B cell (primary cell): ENCODE measurements at regions of chr3 and their contacts with region 1.

Region 1: GRCh38 chr3:108505811-108506210 is 4.6 kb downstream of the MYH15 start:
- DNase-seq: no peak
- ATAC-seq: no peak
- H3K4me3 ChIP-seq: no peak overlapping the region
- H3K4me3 Mint-ChIP-seq: no peak overlapping the region
- H3K27ac ChIP-seq: no peak overlapping the region
- H3K27ac Mint-ChIP-seq: no peak overlapping the region
- H3K4me1 ChIP-seq: no peaks in the 10 kb centered on the region
- H3K4me1 Mint-ChIP-seq: no peaks in the 10 kb centered on the region
- H3K27me3 ChIP-seq: no peaks in the 10 kb centered on the region
- H3K27me3 Mint-ChIP-seq: no peaks in the 10 kb centered on the region
- CTCF ChIP-seq: no peak

Region 2: DNA sequence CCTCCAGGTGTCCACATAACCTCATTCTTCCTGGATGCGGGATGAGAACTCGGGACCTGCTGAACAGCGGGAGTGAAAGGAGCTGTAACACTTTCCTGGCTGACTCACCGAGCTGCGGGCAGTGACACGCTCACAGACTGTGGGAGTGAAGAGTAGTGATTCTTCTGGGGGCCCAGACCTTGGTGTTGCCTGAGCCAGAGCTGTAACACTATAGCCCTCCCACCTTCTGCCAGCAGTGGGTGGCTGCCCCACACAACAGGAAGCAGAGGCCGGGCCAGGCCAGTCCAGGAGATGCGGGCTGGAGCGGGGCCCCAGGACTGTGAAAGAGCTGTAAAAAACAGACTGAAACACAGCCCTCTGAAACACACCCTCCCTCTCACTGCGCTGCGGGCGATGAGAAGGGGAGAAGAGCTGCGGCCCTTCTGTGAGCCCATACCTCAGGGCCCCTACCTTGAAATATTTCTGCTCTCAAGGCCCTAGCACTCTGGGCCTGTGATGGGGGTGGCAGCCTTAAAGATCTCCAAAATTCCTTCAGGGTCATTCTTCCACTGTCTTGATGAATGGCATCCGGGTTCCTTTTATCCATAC is 1592.6 kb before region 1 on chr3:
- CTCF ChIA-PET with region 1: no interaction called
- POLR2A ChIA-PET with region 1: no interaction called
- intact Hi-C with region 1: no loop called
- DNase-seq: no peak
- ATAC-seq: no peak
- H3K4me3 ChIP-seq: no peak overlapping the region
- H3K4me3 Mint-ChIP-seq: no peak overlapping the region
- H3K27ac ChIP-seq: no peak overlapping the region
- H3K27ac Mint-ChIP-seq: no peak overlapping the region
- H3K4me1 ChIP-seq: no peaks in the 10 kb centered on the region
- H3K4me1 Mint-ChIP-seq: no peaks in the 10 kb centered on the region
- H3K27me3 ChIP-seq: peaks cover 0 to 5% (median 0%) of the 10 kb centered on the region in 4 experiments
- H3K27me3 Mint-ChIP-seq: no peaks in the 10 kb centered on the region
- CTCF ChIP-seq: no peak

Region 3: DNA sequence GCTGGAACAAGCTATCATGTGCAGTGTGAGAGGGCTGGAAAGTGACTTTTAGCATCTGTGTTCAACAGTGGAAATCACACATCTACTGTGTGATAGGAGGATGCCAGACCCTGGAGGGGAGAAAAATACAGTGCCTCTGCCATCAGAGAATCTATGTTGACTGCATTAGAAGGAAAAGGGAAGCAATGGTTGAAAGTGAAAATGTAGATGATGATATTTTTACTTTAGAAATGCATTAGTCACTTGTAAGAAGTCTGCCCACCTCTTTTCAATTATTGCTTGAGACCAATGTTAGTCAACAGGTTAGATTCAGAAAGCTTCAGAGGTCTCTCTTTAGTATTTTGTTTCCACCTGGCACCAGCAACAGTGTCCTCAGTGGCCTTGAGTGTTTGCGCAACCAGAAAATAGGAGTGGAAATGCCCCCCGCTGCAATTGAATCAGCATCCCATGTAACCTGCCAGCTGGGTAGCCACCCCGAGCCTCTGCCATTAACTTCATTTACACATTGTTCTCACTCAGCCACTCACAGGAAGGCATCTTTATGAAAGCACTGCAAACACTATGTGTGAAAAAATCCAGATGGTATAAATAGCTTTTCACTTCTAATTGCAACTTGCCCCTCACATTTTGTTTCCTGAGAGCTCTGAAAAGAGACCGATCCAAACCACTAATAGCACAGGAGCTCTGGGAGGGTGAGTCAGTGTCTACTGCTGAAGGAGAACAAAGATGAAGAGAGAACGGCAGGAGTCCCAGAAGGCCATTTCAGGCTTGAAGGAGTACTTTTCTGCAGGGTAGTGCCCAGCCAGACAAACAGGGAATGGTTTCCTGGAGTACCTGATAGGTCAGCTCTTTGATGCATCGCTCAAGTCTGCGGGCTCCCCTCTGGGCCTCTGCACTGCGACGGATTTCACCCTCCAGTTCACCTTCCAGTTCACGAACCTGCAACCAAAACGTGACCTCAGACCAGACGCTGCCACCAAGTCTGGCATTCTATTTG is 117.4 kb before region 1 on chr3:
- CTCF ChIA-PET with region 1: no interaction called
- POLR2A ChIA-PET with region 1: no interaction called
- intact Hi-C with region 1: no loop called
- DNase-seq: peak; percentile 21
- ATAC-seq: peak; percentile 56
- H3K4me3 ChIP-seq: no peak overlapping the region
- H3K4me3 Mint-ChIP-seq: peak overlapping the region; percentile 59
- H3K27ac ChIP-seq: no peak overlapping the region
- H3K27ac Mint-ChIP-seq: peak overlapping the region; percentile 28
- H3K4me1 ChIP-seq: peaks cover 20 to 24% of the 10 kb centered on the region in 2 donors
- H3K4me1 Mint-ChIP-seq: peaks cover 22% of the 10 kb centered on the region
- H3K27me3 ChIP-seq: no peaks in the 10 kb centered on the region
- H3K27me3 Mint-ChIP-seq: peaks cover 4% of the 10 kb centered on the region
- CTCF ChIP-seq: no peak

Region 4: DNA sequence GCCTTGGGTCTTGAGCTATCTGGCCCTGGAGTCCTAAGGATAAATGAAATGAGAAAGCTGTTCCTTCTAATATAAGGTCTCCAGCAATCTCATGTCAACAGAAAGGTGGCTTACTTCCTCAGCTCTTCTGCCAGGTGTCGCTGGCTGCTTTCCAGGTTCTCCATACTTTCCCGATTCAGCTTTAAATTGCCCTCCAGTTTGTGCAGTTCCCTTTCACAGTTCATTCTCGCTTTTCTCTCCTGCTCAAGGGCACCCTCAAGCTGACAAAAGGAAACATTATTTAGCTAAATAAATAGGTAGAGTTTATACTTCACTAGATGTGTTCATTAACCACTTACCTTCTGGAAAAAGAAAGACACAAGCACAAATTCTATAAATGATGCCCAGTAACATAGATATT is 68.4 kb before region 1 on chr3:
- CTCF ChIA-PET with region 1: no interaction called
- POLR2A ChIA-PET with region 1: no interaction called
- intact Hi-C with region 1: no loop called
- DNase-seq: no peak
- ATAC-seq: no peak
- H3K4me3 ChIP-seq: no peak overlapping the region
- H3K4me3 Mint-ChIP-seq: no peak overlapping the region
- H3K27ac ChIP-seq: no peak overlapping the region
- H3K27ac Mint-ChIP-seq: no peak overlapping the region
- H3K4me1 ChIP-seq: no peaks in the 10 kb centered on the region
- H3K4me1 Mint-ChIP-seq: no peaks in the 10 kb centered on the region
- H3K27me3 ChIP-seq: no peaks in the 10 kb centered on the region
- H3K27me3 Mint-ChIP-seq: peaks cover 3% of the 10 kb centered on the region
- CTCF ChIP-seq: no peak

Region 5: DNA sequence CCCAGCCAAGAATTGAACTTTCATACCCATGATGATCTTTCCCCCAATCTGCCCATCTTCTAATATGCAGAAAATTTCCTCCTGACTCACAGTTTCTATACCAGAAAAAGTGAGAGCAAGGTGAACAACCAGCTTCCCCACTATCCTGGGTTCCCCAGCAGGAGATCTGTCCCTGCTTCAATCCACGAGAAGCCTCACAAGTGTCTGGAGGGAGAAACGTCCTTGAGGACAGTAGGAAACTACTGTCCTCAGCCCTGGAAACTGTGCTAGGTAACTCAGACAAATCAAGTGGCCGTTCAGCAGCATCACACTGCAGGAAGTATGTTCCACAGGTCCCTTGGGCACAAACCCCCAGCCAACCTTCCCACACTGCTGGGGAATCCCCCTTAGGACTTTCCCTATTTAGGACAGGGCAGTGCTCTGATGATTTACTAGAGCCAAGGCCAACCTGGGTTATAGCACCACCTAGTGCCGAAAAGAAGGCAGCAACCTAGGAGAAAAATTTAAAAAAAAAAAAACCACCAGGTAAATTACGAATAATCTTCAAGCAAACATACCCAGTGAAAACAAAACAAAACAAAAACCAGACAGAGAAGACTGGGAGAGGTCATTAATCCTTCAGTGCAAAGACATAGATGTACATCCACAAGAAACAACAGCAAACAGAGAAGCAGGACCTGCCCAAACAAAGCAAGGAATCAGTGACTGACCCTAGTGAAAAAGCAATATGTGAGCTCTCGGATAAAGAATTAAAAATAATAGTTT is 576.1 kb after region 1 on chr3:
- CTCF ChIA-PET with region 1: no interaction called
- POLR2A ChIA-PET with region 1: interaction called, 11 read pairs
- intact Hi-C with region 1: no loop called
- DNase-seq: peak; percentile 71
- ATAC-seq: peak; percentile 72
- H3K4me3 ChIP-seq: no peak overlapping the region
- H3K4me3 Mint-ChIP-seq: no peak overlapping the region
- H3K27ac ChIP-seq: no peak overlapping the region
- H3K27ac Mint-ChIP-seq: no peak overlapping the region
- H3K4me1 ChIP-seq: peaks cover 0 to 3% of the 10 kb centered on the region in 2 donors
- H3K4me1 Mint-ChIP-seq: peaks cover 5% of the 10 kb centered on the region
- H3K27me3 ChIP-seq: no peaks in the 10 kb centered on the region
- H3K27me3 Mint-ChIP-seq: peaks cover 14% of the 10 kb centered on the region
- CTCF ChIP-seq: peak; percentile 72